ENCODE measurements at regions of chr1 and their contacts with region 1.

Region 1: DNA sequence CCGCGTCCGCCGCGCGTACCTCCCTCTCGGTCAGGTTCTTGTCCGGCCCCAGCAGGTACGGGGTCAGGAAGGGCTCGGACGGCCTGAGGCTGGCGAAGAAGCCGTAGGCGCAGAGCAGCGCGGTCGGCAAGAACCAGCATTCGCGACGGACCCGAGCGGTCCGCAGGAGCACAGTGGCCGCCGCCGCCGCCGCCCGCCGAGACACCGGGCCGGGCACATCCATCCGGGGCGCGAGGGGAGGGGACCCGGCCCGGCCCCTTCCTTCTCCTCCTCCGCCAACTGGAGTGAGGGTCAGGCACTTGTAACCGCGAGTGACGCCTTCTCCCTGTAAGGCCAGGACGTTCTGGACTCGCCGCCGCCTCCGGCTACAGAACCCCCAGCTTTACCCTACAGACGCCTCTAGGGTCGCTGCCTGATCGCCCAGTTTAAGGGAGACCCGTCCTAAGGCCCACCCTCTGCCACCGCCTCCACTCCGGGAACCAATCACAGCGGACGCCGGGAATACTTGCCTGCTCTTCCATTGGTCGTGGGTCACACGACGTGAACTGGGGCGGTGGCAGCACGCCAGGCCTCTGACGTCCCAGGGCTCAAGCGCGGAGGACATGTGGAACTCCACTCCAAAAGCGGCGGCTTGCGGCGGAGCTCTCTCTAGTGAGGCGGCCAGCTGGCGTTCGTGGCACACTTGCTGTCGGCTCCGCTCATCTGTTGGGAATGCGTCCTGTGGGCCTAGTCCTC is at the start of gene SLC19A2:
- DNase-seq: peak; percentile 96
- ATAC-seq: peak; percentile 98
- H3K4me3 ChIP-seq: peak within 1 kb of the TSS; percentile 68 to 82 (median 74)
- H3K4me3 Mint-ChIP-seq: peak within 1 kb of the TSS; percentile 94
- H3K27ac ChIP-seq: peak within 1 kb of the TSS; percentile 62 to 82
- H3K27ac Mint-ChIP-seq: peak within 1 kb of the TSS; percentile 93
- H3K4me1 ChIP-seq: peaks cover 16 to 18% of the 10 kb centered on the region in 2 donors
- H3K4me1 Mint-ChIP-seq: peaks cover 28% of the 10 kb centered on the region
- H3K27me3 ChIP-seq: peaks cover 0 to 3% (median 0%) of the 10 kb centered on the region in 4 experiments
- H3K27me3 Mint-ChIP-seq: peaks cover 4% of the 10 kb centered on the region
- CTCF ChIP-seq: peak; percentile 44
- total RNA-seq, gene SLC19A2: 3.9 TPM in 2 replicates

Region 2: GRCh38 chr1:169106095-169106920 is 379.4 kb before region 1 on chr1 and contains the start of gene ATP1B1:
- CTCF ChIA-PET with region 1: no interaction called
- POLR2A ChIA-PET with region 1: no interaction called
- intact Hi-C with region 1: loop called (anchors 2 kb)
- DNase-seq: peak; percentile 81
- ATAC-seq: peak; percentile 95
- H3K4me3 ChIP-seq: peak within 1 kb of the TSS; percentile 17 to 78 (median 63)
- H3K4me3 Mint-ChIP-seq: no peak within 1 kb of the TSS
- H3K27ac ChIP-seq: no peak within 1 kb of the TSS
- H3K27ac Mint-ChIP-seq: peak within 1 kb of the TSS; percentile 63
- H3K4me1 ChIP-seq: peaks cover 17 to 18% of the 10 kb centered on the region in 2 donors
- H3K4me1 Mint-ChIP-seq: peaks cover 16% of the 10 kb centered on the region
- H3K27me3 ChIP-seq: peaks cover 0 to 45% (median 24%) of the 10 kb centered on the region in 4 experiments
- H3K27me3 Mint-ChIP-seq: peaks cover 37% of the 10 kb centered on the region
- CTCF ChIP-seq: peak; percentile 58
- total RNA-seq, gene ATP1B1: 1.7 and 3.1 TPM in 2 replicates

Region 3: GRCh38 chr1:169466259-169467230 is 19.2 kb before region 1 on chr1:
- CTCF ChIA-PET with region 1: no interaction called
- POLR2A ChIA-PET with region 1: no interaction called
- intact Hi-C with region 1: no loop called
- DNase-seq: peak; percentile 46
- ATAC-seq: no peak
- H3K4me3 ChIP-seq: no peak overlapping the region
- H3K4me3 Mint-ChIP-seq: no peak overlapping the region
- H3K27ac ChIP-seq: no peak overlapping the region
- H3K27ac Mint-ChIP-seq: no peak overlapping the region
- H3K4me1 ChIP-seq: no peaks in the 10 kb centered on the region
- H3K4me1 Mint-ChIP-seq: no peaks in the 10 kb centered on the region
- H3K27me3 ChIP-seq: no peaks in the 10 kb centered on the region
- H3K27me3 Mint-ChIP-seq: no peaks in the 10 kb centered on the region
- CTCF ChIP-seq: peak; percentile 22

Region 4: DNA sequence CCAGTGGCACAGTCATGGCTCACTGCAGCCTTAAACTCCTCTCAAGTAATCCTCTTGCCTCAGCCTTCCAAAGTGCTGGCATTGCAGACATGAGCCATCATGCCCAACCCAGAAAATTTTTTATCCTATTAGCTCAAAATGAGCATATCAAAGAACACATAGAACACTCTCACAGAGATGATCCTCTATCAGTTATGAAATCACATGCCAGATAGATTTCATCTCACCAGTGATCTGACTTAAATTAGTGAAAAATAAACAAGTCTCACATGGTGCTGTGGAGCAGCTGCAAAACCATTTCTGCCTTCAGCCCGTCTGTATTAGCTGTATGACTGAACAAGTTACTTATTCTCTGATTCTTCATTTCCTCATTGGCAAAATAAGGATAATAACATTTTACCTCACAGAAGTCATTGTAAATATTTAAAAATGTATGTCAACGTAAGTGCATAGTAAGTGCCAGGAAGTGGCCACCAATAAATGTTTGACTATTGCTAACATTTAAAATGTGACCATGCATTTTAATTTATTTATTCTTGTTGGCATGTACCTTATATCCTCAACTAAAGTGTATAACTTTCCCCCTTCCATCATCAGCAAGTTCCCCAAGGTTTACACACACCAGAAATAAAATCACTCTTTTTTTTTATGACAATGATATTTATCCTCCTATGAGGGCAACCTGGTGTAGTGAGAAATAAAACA is 29.0 kb after region 1 on chr1:
- CTCF ChIA-PET with region 1: no interaction called
- POLR2A ChIA-PET with region 1: no interaction called
- intact Hi-C with region 1: no loop called
- DNase-seq: no peak
- ATAC-seq: no peak
- H3K4me3 ChIP-seq: no peak overlapping the region
- H3K4me3 Mint-ChIP-seq: no peak overlapping the region
- H3K27ac ChIP-seq: no peak overlapping the region
- H3K27ac Mint-ChIP-seq: no peak overlapping the region
- H3K4me1 ChIP-seq: no peaks in the 10 kb centered on the region
- H3K4me1 Mint-ChIP-seq: no peaks in the 10 kb centered on the region
- H3K27me3 ChIP-seq: no peaks in the 10 kb centered on the region
- H3K27me3 Mint-ChIP-seq: no peaks in the 10 kb centered on the region
- CTCF ChIP-seq: no peak

Region 5: DNA sequence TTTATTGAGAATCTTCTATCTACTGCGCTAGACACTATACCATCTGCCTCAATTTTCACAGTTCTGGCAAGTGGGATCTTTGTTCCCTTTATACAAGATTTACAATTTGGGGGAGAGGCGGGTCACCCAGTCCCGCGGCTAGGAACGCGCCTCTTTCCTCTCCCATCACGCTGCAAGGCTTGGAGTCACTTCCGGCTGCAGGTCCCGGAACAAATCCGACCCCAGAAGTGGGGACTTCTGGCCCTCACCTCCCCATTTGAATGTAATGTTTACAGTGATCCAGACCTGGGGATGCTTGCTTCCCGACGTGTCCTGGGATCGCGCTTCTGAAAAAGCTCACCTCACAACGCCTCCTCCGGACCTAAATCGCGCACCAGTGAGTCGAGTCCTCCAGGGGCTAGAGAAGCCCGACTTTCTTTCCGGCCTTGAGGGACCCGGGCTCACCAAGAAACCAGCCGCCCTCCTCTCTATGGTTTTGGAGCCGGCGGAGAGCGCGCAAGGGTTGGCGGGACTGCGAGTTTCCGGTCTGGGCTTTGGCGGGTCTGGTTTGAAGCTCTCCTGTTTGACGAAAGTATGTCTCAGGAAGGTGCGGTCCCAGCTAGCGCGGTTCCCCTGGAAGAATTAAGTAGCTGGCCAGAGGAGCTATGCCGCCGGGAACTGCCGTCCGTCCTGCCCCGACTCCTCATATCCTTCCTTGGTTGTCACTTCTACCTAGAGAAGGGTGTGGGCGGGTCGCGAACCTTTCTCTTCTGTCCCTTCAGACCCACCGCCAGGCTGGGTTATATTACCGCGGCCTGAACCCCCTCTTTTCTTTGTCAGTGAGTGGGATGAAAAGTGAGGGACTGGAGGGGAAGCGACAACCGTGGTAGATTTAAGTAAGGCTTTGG is 309.1 kb after region 1 on chr1 and contains the start of gene METTL18:
- CTCF ChIA-PET with region 1: no interaction called
- POLR2A ChIA-PET with region 1: no interaction called
- intact Hi-C with region 1: loop called (anchors 1 kb)
- DNase-seq: peak; percentile 96
- ATAC-seq: peak; percentile 99
- H3K4me3 ChIP-seq: peak within 1 kb of the TSS; percentile 70 to 99 (median 94)
- H3K4me3 Mint-ChIP-seq: peak within 1 kb of the TSS; percentile 96
- H3K27ac ChIP-seq: peak within 1 kb of the TSS; percentile 72 to 91
- H3K27ac Mint-ChIP-seq: peak within 1 kb of the TSS; percentile 96
- H3K4me1 ChIP-seq: peaks cover 15 to 16% of the 10 kb centered on the region in 2 donors
- H3K4me1 Mint-ChIP-seq: peaks cover 45% of the 10 kb centered on the region
- H3K27me3 ChIP-seq: no peaks in the 10 kb centered on the region
- H3K27me3 Mint-ChIP-seq: no peaks in the 10 kb centered on the region
- CTCF ChIP-seq: no peak
- total RNA-seq, gene METTL18: 16.9 and 18.9 TPM in 2 replicates

Region 6: GRCh38 chr1:170074250-170075157 is 588.8 kb after region 1 on chr1 and contains the start of gene KIFAP3:
- CTCF ChIA-PET with region 1: no interaction called
- POLR2A ChIA-PET with region 1: no interaction called
- intact Hi-C with region 1: loop called (anchors 2 kb)
- DNase-seq: peak; percentile 98
- ATAC-seq: peak; percentile 93
- H3K4me3 ChIP-seq: peak within 1 kb of the TSS; percentile 43 to 78 (median 66)
- H3K4me3 Mint-ChIP-seq: peak within 1 kb of the TSS; percentile 92
- H3K27ac ChIP-seq: peak within 1 kb of the TSS; percentile 63 to 84
- H3K27ac Mint-ChIP-seq: peak within 1 kb of the TSS; percentile 95
- H3K4me1 ChIP-seq: peaks cover 19 to 20% of the 10 kb centered on the region in 2 donors
- H3K4me1 Mint-ChIP-seq: peaks cover 44% of the 10 kb centered on the region
- H3K27me3 ChIP-seq: no peaks in the 10 kb centered on the region
- H3K27me3 Mint-ChIP-seq: peaks cover 11% of the 10 kb centered on the region
- CTCF ChIP-seq: peak; percentile 52
- total RNA-seq, gene KIFAP3: 14.1 and 14.9 TPM in 2 replicates